H1 (cell line): ENCODE measurements at regions of chr3 and their contacts with region 1.

Region 1: GRCh38 chr3:194682694-194683310 is 2.9 kb upstream of the FAM43A start:
- DNase-seq: peak; percentile 54 to 74
- H3K4me3 ChIP-seq: no peak overlapping the region
- H3K27ac ChIP-seq: no peak overlapping the region
- H3K4me1 ChIP-seq: peaks cover 0 to 10% (median 9%) of the 10 kb centered on the region in 4 experiments; a peak in 6 of 7 replicates
- H3K27me3 ChIP-seq: peaks cover 7 to 36% (median 29%) of the 10 kb centered on the region in 4 experiments
- CTCF ChIP-seq: peak; percentile 52 to 96 (median 95)
- EP300 ChIP-seq: 0 out of 3 replicates have a peak, but pooled peaks of 1 of the 2 experiments have one; percentile 14
- POLR2A ChIP-seq: no peak
- RAD21 ChIP-seq: peak; percentile 95 to 99

Region 2: DNA sequence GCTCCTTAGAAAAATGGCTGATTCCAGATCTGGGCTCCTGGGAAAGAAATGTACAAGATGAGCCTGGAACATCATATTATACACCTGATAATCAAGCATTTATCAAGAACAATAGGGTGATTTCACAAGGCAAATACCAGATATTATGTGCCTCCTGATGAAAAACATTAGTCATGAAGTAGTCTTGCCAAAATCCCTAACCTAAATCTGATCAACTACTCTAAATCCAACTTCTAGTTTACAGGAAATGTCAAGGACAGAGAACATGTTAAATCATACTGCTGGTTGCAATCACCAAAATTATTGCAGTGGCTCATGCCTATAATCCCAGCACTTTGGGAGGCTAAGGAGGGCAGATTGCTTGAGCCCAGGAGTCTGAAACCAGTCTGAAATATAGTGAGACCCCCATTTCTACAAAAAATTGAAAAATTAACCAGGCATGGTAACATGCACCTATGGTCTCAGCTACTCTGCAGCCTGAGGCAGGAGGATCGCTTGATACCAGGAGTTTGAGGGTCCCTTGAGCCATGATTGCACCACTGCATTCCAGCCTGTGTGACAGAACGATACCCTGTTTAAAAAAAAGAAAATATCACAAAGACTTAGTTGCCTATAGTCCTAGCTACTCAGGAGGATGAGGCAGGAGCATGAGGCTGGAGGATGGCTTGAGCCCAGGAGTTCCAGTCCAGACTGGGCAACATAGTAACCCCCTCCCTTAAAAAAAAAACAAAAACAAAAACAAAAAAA is 161.1 kb before region 1 on chr3:
- CTCF ChIA-PET with region 1: no interaction called
- POLR2A ChIA-PET with region 1: no interaction called
- DNase-seq: no peak
- H3K4me3 ChIP-seq: no peak overlapping the region
- H3K27ac ChIP-seq: no peak overlapping the region
- H3K4me1 ChIP-seq: no peaks in the 10 kb centered on the region
- H3K27me3 ChIP-seq: no peaks in the 10 kb centered on the region
- CTCF ChIP-seq: no peak
- EP300 ChIP-seq: no peak
- POLR2A ChIP-seq: no peak
- RAD21 ChIP-seq: no peak

Region 3: DNA sequence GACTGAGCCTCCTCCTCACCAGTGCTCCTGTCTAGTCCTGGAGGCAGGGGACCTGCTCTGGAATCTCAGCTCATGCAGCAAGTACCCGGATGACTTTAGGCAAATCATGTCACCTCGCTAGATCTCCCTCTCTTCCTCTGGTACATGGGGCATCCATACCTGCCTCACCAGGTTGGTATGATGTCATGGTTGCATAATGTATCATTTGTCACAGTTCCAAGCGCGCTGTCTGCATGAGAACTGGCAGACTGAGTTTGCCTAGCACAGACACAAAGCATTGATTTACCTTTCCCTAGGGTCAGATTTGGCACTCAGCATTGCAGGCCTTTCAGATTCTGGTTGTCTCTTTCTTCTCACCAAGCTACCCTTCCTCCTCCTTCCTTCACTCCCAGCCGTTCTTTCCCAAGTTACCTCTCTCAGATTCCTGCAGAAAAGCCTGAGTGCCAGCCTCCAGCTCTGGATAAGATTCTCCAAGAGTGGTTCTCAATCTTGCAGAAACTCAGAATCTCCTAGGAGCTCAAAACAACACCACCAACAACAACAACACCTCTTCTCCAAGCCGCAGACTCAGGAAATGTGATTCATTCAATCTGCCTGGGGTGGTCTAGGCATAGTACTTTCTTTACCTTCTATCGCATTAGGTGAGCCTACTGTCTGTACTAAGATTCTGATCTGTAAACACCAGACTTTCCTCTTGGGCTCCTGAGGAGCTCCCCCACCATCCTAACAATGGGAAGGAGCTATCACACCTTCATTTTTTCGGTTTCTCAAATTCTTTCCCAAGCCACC is 32.4 kb after region 1 on chr3:
- CTCF ChIA-PET with region 1: interaction called, 12 read pairs
- POLR2A ChIA-PET with region 1: interaction called, 4 read pairs
- DNase-seq: no peak
- H3K4me3 ChIP-seq: no peak overlapping the region
- H3K27ac ChIP-seq: no peak overlapping the region
- H3K4me1 ChIP-seq: no peaks in the 10 kb centered on the region
- H3K27me3 ChIP-seq: no peaks in the 10 kb centered on the region
- CTCF ChIP-seq: no peak
- EP300 ChIP-seq: no peak
- POLR2A ChIP-seq: no peak
- RAD21 ChIP-seq: no peak

Region 4: GRCh38 chr3:194861375-194861774 is 178.6 kb after region 1 on chr3:
- CTCF ChIA-PET with region 1: interaction called, 11 read pairs
- POLR2A ChIA-PET with region 1: no interaction called
- DNase-seq: no peak
- H3K4me3 ChIP-seq: no peak overlapping the region
- H3K27ac ChIP-seq: no peak overlapping the region
- H3K4me1 ChIP-seq: peaks cover 0 to 5% (median 1%) of the 10 kb centered on the region in 4 experiments; a peak in 3 of 7 replicates
- H3K27me3 ChIP-seq: no peaks in the 10 kb centered on the region
- CTCF ChIP-seq: no peak
- EP300 ChIP-seq: no peak
- POLR2A ChIP-seq: no peak
- RAD21 ChIP-seq: no peak

Region 5: DNA sequence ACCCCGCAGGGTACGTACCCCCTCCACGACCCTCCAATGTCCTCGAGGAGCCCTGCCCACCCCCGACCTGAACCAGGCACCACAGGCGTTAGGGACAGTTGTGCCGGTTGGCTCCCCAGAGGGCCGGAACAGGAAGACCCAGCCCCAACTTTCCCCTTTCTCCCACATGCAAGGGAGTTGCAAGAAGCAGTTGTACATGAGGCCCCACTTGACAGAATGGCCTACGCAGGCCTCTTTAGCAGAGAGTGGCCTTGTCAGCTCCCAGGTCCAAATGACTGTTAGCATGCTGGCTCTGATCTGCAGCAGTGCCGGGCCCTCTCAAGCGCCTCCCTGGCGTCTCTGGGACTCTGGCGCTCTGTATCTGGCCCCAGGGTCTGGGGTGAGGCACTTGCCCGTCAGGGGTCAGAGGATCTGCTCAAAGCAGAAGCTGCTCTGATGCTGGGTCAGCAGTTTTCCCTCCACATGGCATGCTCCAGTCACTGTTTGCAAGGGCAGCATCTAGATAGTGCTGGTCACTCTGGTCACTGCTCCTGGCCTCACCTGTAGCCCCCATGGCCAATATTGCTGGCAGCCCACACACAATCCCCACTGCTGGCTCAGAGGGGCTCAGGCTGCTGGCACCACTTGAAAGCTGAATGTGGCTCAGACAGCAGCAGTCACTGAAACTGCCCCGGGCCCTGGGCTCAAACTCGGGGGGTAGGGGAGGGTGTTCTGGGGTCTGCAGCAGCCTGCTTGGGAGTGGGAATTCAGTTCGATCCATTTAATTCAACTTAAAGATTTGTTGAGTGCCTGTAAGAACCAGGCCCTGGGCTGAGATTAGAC is 257.4 kb after region 1 on chr3:
- CTCF ChIA-PET with region 1: interaction called, 22 read pairs
- POLR2A ChIA-PET with region 1: no interaction called
- DNase-seq: peak in 1 of 2 experiments; percentile 36
- H3K4me3 ChIP-seq: no peak overlapping the region
- H3K27ac ChIP-seq: no peak overlapping the region
- H3K4me1 ChIP-seq: no peaks in the 10 kb centered on the region
- H3K27me3 ChIP-seq: no peaks in the 10 kb centered on the region
- CTCF ChIP-seq: no peak
- EP300 ChIP-seq: no peak
- POLR2A ChIP-seq: no peak
- RAD21 ChIP-seq: no peak

Region 6: GRCh38 chr3:194976049-194976451 is 293.2 kb after region 1 on chr3:
- CTCF ChIA-PET with region 1: interaction called, 18 read pairs
- POLR2A ChIA-PET with region 1: no interaction called
- DNase-seq: peak in 1 of 2 experiments; percentile 24
- H3K4me3 ChIP-seq: no peak overlapping the region
- H3K27ac ChIP-seq: no peak overlapping the region
- H3K4me1 ChIP-seq: no peaks in the 10 kb centered on the region
- H3K27me3 ChIP-seq: no peaks in the 10 kb centered on the region
- CTCF ChIP-seq: no peak
- EP300 ChIP-seq: no peak
- POLR2A ChIP-seq: no peak
- RAD21 ChIP-seq: no peak

Region 7: DNA sequence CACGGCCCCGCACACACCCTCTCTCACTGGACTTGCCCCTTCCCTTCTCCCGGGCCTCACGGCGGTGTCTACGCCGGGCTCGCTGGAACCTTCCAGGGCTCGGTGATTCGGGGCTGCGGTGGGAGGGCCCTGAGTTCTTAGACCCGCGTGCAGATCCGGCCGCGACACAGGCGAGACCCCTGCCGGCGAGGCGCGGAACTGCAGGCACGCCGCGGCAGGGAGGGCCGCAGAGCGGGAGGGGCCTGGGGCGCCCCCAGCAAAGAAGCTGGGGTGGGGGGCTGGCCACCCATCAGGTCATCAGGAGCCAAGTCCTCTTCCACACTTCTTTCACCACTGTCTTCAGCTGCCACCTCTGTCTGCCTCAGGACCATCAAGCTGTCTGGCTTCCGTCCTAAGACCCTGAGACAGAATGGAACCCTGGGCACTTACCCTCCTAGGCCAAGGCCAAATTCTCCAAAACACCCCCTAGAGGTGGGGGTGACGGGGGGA is 423.7 kb after region 1 on chr3:
- CTCF ChIA-PET with region 1: interaction called, 16 read pairs
- POLR2A ChIA-PET with region 1: interaction called, 6 read pairs
- DNase-seq: peak in 1 of 2 experiments; percentile 90
- H3K4me3 ChIP-seq: peak overlapping the region in 1 of 4 experiments; percentile 4; a peak in 1 of 8 replicates
- H3K27ac ChIP-seq: no peak overlapping the region
- H3K4me1 ChIP-seq: peaks cover 2 to 4% (median 2%) of the 10 kb centered on the region in 4 experiments; a peak in 4 of 7 replicates
- H3K27me3 ChIP-seq: no peaks in the 10 kb centered on the region
- CTCF ChIP-seq: peak; percentile 84 to 96 (median 90)
- EP300 ChIP-seq: 0 out of 3 replicates have a peak, but pooled peaks of 1 of the 2 experiments have one; percentile 41
- POLR2A ChIP-seq: no peak
- RAD21 ChIP-seq: peak; percentile 85 to 91